ENCODE measurements at regions of chr2 and their contacts with region 1.

Region 1: GRCh38 chr2:133886735-133887660 is 318.7 kb upstream of the NCKAP5 start:
- DNase-seq: peak; percentile 87
- H3K4me3 ChIP-seq: no peak overlapping the region
- H3K4me3 Mint-ChIP-seq: peak overlapping the region; percentile 25
- H3K27ac Mint-ChIP-seq: no peak overlapping the region
- H3K4me1 ChIP-seq: peaks cover 20% of the 10 kb centered on the region
- H3K4me1 Mint-ChIP-seq: peaks cover 25% of the 10 kb centered on the region
- H3K27me3 ChIP-seq: no peaks in the 10 kb centered on the region
- H3K27me3 Mint-ChIP-seq: no peaks in the 10 kb centered on the region
- CTCF ChIP-seq: peak; percentile 66 to 85

Region 2: DNA sequence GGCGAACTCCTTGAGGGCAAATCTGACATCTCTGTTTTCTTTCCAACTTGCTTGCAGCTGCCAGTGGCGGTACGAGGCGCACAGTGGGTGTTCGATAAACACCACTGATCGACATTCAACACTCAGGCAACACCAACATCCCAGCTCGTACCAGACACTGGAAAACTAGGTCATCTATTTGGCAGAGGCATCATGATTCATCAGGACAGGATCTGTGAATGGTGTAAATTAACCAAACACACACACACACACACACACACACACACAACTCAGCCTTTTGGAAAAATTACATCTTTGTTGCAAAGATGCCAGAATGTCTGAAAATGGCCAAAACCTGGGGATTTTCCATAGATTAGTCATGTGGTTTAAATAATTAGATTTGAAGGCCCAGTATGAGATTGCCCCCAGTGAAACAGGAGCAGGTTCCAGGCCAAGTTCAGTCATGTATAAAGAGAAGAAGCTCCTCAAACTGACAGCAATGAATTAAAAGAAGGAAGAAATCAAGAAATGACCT is 168.3 kb before region 1 on chr2:
- CTCF ChIA-PET with region 1: no interaction called
- POLR2A ChIA-PET with region 1: no interaction called
- intact Hi-C with region 1: no loop called
- DNase-seq: no peak
- H3K4me3 ChIP-seq: no peak overlapping the region
- H3K4me3 Mint-ChIP-seq: no peak overlapping the region
- H3K27ac Mint-ChIP-seq: no peak overlapping the region
- H3K4me1 ChIP-seq: no peaks in the 10 kb centered on the region
- H3K4me1 Mint-ChIP-seq: no peaks in the 10 kb centered on the region
- H3K27me3 ChIP-seq: no peaks in the 10 kb centered on the region
- H3K27me3 Mint-ChIP-seq: no peaks in the 10 kb centered on the region
- CTCF ChIP-seq: no peak

Region 3: DNA sequence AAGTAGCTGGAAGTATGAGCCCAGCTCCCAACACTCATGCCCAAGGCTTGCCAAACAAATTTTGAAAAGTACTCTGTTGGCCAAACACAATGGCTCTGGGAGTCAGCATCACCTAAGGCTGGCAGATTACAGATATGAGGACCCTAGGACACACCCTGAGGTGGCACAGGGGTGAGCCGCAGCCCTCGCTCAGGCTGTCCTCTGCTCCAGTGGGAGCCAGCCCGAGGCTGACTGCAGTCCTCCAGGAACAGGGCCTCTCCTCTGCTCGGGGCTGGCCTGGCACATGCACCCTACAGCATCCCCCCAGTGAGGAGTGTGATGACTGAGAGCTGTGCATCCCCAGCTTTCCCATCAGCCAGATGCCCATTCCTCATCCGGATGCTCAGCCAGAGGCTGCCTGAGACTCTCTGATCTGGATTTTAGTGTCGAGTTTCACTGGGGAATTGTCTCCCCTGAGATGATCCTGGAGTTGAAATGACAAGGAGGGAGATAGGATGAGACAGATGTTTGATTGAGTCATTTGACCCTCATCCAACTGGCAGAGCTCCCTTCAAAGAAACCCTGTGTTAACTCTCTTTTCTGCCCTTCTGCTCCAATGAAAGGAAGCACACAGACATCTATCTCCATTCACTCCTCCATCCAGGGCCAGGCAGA is 49.4 kb before region 1 on chr2:
- CTCF ChIA-PET with region 1: no interaction called
- POLR2A ChIA-PET with region 1: no interaction called
- intact Hi-C with region 1: no loop called
- DNase-seq: no peak
- H3K4me3 ChIP-seq: no peak overlapping the region
- H3K4me3 Mint-ChIP-seq: no peak overlapping the region
- H3K27ac Mint-ChIP-seq: no peak overlapping the region
- H3K4me1 ChIP-seq: no peaks in the 10 kb centered on the region
- H3K4me1 Mint-ChIP-seq: peaks cover 7% of the 10 kb centered on the region
- H3K27me3 ChIP-seq: no peaks in the 10 kb centered on the region
- H3K27me3 Mint-ChIP-seq: no peaks in the 10 kb centered on the region
- CTCF ChIP-seq: no peak

Region 4: DNA sequence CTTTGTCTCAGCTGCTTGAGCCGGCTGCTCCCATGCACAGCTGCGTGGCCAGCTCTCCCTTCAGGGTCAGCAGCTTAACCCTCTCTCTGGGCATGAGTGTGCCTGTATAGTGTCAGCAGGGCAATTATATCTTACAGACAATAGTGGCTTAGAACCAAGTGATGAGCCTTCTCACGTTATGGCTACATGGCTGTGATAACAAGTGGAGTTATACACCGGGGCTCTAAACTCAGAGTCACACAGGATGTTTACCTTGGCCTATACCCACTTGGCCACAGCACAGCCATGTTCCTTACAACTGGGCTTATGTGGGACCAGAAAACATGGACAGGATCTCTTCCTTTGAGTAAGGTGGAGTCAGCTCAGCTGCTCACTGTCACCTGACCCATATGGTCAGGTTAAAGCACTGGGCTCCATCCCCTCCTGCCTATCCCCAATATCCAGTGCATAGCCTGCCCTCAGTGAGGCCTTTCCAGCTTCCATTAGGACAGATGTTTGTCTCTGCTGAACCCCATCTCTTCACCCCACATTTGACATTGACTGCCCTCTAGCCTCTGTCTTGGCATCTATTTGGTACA is 24.5 kb before region 1 on chr2:
- CTCF ChIA-PET with region 1: no interaction called
- POLR2A ChIA-PET with region 1: no interaction called
- intact Hi-C with region 1: no loop called
- DNase-seq: no peak
- H3K4me3 ChIP-seq: no peak overlapping the region
- H3K4me3 Mint-ChIP-seq: no peak overlapping the region
- H3K27ac Mint-ChIP-seq: no peak overlapping the region
- H3K4me1 ChIP-seq: no peaks in the 10 kb centered on the region
- H3K4me1 Mint-ChIP-seq: no peaks in the 10 kb centered on the region
- H3K27me3 ChIP-seq: no peaks in the 10 kb centered on the region
- H3K27me3 Mint-ChIP-seq: peaks cover 23% of the 10 kb centered on the region
- CTCF ChIP-seq: no peak

Region 5: DNA sequence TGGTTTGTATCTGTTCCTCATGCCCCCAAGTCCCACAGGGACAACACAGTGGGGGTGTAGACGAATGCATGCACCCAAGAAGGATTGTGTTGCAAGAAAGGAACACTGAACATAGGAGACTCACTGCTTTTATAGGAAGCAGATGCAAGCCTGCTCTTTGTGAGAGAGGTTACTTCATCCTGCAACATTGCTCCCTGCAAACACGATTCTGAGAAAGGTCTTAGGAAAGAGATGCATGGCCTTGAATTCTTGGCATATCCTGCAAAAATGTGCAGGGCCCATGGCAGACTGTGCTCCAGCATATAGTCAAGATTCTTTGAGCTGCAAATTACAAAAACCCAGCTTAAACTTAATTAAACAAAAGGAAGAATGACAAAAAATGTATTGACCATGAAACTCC is 54.7 kb after region 1 on chr2:
- CTCF ChIA-PET with region 1: interaction called, 10 read pairs
- POLR2A ChIA-PET with region 1: no interaction called
- intact Hi-C with region 1: loop called (anchors 1 kb)
- DNase-seq: no peak
- H3K4me3 ChIP-seq: no peak overlapping the region
- H3K4me3 Mint-ChIP-seq: no peak overlapping the region
- H3K27ac Mint-ChIP-seq: no peak overlapping the region
- H3K4me1 ChIP-seq: peaks cover 12% of the 10 kb centered on the region
- H3K4me1 Mint-ChIP-seq: peaks cover 7% of the 10 kb centered on the region
- H3K27me3 ChIP-seq: no peaks in the 10 kb centered on the region
- H3K27me3 Mint-ChIP-seq: no peaks in the 10 kb centered on the region
- CTCF ChIP-seq: no peak

Region 6: DNA sequence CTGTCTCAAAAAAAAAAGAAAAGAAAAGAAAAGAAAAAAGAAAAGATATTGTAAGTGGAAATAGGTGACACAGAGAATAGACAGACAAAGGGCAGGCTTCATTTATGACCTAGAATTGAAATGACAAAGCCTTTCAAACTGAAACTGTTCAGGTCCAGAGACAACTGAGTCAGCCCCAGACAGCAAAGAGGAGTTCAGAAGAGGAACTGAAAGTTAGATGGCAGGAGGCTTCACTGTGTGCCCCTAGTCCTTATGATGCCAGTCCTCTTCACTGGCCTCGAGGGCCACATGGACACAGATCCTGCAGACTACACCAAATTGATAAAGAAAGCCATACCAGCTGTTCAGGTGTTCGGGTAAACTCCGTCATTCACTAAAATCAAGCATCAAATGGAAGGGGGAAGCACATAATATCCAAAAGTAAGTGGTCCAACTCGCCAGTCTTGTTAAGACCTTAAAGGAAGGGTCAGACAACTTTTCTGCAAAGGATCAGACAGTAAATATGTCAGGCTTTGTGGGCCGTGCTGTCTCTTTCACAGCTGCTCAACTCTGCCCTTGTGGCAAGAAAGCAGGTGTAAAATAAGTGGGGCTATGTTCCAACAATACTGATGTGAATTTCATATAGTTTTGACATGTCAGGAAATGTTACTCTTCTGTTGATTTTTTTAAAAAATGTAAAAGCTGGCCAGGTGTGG is 135.0 kb after region 1 on chr2:
- CTCF ChIA-PET with region 1: no interaction called
- POLR2A ChIA-PET with region 1: no interaction called
- intact Hi-C with region 1: loop called (anchors 5 kb)
- DNase-seq: no peak
- H3K4me3 ChIP-seq: no peak overlapping the region
- H3K4me3 Mint-ChIP-seq: no peak overlapping the region
- H3K27ac Mint-ChIP-seq: no peak overlapping the region
- H3K4me1 ChIP-seq: no peaks in the 10 kb centered on the region
- H3K4me1 Mint-ChIP-seq: no peaks in the 10 kb centered on the region
- H3K27me3 ChIP-seq: no peaks in the 10 kb centered on the region; the same call in 1 of the 2 replicates
- H3K27me3 Mint-ChIP-seq: no peaks in the 10 kb centered on the region
- CTCF ChIP-seq: no peak

Region 7: DNA sequence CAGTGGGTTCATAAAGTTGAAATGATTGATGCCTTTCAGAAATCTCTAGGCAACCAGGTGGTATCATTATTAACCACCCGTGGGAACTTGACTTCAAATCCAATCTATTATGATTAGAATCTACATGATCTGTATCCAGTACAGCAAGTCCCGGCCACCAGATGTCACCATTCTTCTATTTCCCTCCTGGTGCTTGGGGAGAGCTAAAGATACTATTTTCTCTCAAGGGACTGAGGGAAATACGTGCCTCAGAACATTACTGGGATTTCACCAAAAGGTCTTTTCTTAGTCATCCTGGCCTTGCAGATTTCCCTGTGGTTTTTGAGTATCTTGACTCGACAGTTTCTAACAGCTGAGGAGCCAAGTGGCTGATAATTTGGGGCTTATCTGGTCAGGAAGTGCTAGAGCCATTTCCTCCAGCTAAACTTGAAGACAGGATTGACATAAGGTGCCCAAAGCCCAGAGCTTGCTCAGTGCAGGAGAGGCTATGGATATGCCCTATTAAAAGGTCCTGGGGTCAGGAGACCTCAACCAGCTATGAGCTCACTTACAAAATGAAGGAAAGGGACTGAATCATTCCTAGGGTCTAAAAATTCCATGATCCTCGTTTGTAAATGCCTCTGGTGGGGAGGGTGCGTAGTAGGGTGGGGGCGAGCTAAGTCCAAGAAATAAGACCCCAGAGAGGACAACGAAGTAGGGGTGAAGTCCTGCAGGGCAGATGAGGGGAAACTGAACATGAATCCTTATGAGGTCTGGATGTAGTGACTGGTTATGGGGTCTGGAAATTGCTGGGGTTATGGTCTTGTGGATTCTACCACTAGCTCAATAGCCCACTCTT is 231.5 kb after region 1 on chr2:
- CTCF ChIA-PET with region 1: interaction called, 42 read pairs
- POLR2A ChIA-PET with region 1: no interaction called
- intact Hi-C with region 1: loop called (anchors 1 kb)
- DNase-seq: peak; percentile 81 to 89
- H3K4me3 ChIP-seq: no peak overlapping the region
- H3K4me3 Mint-ChIP-seq: peak overlapping the region; percentile 74
- H3K27ac Mint-ChIP-seq: no peak overlapping the region
- H3K4me1 ChIP-seq: peaks cover under 1% of the 10 kb centered on the region; the same call in 1 of the 2 replicates
- H3K4me1 Mint-ChIP-seq: peaks cover 12% of the 10 kb centered on the region
- H3K27me3 ChIP-seq: no peaks in the 10 kb centered on the region
- H3K27me3 Mint-ChIP-seq: no peaks in the 10 kb centered on the region
- CTCF ChIP-seq: peak; percentile 60 to 84

Region 8: DNA sequence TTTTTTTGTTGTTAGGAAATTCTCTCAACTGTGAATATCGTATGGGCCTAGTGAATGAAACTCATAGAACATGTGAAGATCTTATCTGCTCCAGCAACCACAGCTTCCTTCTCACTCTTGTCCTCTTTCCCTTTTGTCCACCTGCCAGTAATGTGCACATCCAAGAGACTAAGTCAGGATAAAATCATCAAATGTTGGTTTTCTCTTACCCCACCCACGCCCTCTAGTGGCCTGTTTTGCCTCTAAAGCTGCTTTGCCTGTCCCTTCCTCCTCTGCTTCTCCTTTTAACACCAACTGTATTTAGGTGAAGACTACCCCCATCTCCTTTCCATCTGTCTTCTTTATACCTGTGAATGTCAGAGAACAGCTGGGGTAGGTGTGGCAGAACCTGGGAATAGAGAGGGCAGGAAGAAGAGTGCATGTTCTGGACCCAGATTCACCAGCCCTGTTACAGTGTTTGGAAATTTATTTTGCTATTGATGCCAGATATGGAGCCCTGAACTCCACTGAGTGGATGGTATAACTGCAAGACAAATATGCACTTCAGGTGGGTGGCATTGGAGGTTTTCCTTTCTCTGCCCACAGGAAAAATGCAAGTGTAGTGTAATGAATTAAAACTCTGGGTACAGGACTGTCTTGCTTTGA is 358.5 kb after region 1 on chr2:
- CTCF ChIA-PET with region 1: interaction called, 6 read pairs
- POLR2A ChIA-PET with region 1: no interaction called
- intact Hi-C with region 1: loop called (anchors 1 kb)
- DNase-seq: peak; percentile 68 to 81
- H3K4me3 ChIP-seq: no peak overlapping the region
- H3K4me3 Mint-ChIP-seq: no peak overlapping the region
- H3K27ac Mint-ChIP-seq: no peak overlapping the region
- H3K4me1 ChIP-seq: no peaks in the 10 kb centered on the region
- H3K4me1 Mint-ChIP-seq: peaks cover 7% of the 10 kb centered on the region
- H3K27me3 ChIP-seq: no peaks in the 10 kb centered on the region
- H3K27me3 Mint-ChIP-seq: no peaks in the 10 kb centered on the region
- CTCF ChIP-seq: peak; percentile 78 to 85

Region 9: DNA sequence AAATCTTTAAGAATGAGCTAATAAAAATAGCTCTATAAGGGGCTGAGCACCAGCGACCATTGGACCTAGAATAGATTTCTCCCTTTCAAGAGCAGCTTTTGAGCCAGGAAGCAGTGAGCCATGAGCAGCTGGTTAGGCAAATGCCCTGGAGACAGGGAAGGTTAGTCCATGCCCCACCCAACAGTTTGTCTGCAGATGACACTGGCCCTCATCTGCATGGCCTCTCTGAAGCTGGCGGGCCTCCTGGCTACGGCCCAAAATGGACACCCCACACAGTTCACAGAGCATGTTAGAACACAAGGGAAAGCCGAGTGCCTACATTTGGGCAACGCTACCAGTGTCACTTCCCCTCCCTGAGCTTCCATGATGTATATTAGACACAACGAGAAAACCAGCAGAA is 567.9 kb after region 1 on chr2:
- CTCF ChIA-PET with region 1: interaction called, 8 read pairs
- POLR2A ChIA-PET with region 1: no interaction called
- intact Hi-C with region 1: loop called (anchors 5 kb)
- DNase-seq: peak in 1 of 2 experiments; percentile 15
- H3K4me3 ChIP-seq: no peak overlapping the region
- H3K4me3 Mint-ChIP-seq: no peak overlapping the region
- H3K27ac Mint-ChIP-seq: no peak overlapping the region
- H3K4me1 ChIP-seq: peaks cover 3% of the 10 kb centered on the region; the same call in 1 of the 2 replicates
- H3K4me1 Mint-ChIP-seq: peaks cover 7% of the 10 kb centered on the region
- H3K27me3 ChIP-seq: no peaks in the 10 kb centered on the region
- H3K27me3 Mint-ChIP-seq: no peaks in the 10 kb centered on the region
- CTCF ChIP-seq: no peak

Measured in Caco-2 (cell line).